ENCODE measurements at regions of chr16 and their contacts with region 1.

Region 1: GRCh38 chr16:89560378-89561141 is at the start of gene RPL13:
- DNase-seq: peak; percentile 92 to 95
- ATAC-seq: peak; percentile 82 to 86
- H3K4me3 ChIP-seq: peak within 1 kb of the TSS; percentile 60 to 99 (median 78)
- H3K27ac ChIP-seq: peak within 1 kb of the TSS; percentile 91 to 99 (median 96)
- H3K4me1 ChIP-seq: peaks cover 35 to 39% of the 10 kb centered on the region in 2 donors
- H3K27me3 ChIP-seq: no peaks in the 10 kb centered on the region
- CTCF ChIP-seq: peak in 1 of 5 experiments; percentile 15
- POLR2A ChIP-seq: peak; percentile 98
- total RNA-seq, gene RPL13: 4,295 to 5,889 (median 4,806) TPM

Region 2: DNA sequence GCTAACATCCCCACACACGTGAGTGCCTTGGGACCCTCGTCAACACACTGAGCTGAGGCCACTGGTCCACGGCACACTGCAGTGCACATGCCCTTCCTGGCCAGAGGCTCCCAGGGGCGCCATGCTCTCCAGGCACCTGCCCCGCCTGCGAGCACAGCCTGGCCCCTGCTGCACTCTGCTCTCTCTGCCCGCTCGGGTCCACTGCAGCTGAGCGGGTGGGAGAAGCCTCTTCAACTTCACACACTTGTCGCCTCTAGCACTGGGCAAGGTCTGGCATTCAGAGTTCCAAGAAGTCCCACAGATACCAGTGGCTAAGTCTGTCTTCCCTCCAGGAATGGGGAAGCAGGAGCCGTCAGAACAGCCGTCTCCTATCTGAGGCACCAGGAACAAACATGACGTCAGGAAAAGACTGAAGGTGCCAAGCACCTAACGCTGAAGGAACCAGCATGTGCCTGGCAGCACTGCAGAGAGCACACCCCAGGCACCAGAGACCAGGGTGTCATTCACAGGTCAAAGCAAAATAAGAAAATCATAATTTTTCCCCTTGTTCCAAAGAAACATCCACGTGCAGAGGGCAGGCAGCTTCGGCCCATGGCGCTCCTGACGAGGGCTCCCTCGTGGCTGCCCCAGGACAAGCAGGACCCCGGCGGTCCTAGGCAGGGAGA is 260.1 kb before region 1 on chr16:
- in situ Hi-C with region 1: no loop called
- intact Hi-C with region 1: loop called (anchors 5 kb)
- DNase-seq: peak; percentile 76 to 92
- ATAC-seq: peak; percentile 81 to 84
- H3K4me3 ChIP-seq: no peak overlapping the region
- H3K27ac ChIP-seq: peak overlapping the region; percentile 91 to 97 (median 92)
- H3K4me1 ChIP-seq: peaks cover 38 to 51% of the 10 kb centered on the region in 2 donors
- H3K27me3 ChIP-seq: no peaks in the 10 kb centered on the region
- CTCF ChIP-seq: no peak
- POLR2A ChIP-seq: peak; percentile 56 to 61

Region 3: GRCh38 chr16:89334988-89335802 is 225.4 kb before region 1 on chr16:
- in situ Hi-C with region 1: no loop called
- intact Hi-C with region 1: loop called (anchors 1 kb)
- DNase-seq: peak in 1 of 2 donors; percentile 28
- ATAC-seq: peak in 1 of 2 donors; percentile 28
- H3K4me3 ChIP-seq: peak overlapping the region in 3 of 4 donors; percentile 0 to 24 (median 8)
- H3K27ac ChIP-seq: peak overlapping the region; percentile 89 to 97 (median 94)
- H3K4me1 ChIP-seq: peaks cover 80 to 84% of the 10 kb centered on the region in 2 donors
- H3K27me3 ChIP-seq: no peaks in the 10 kb centered on the region
- CTCF ChIP-seq: peak in 3 of 5 experiments; percentile 5 to 27 (median 23)
- POLR2A ChIP-seq: no peak

Region 4: DNA sequence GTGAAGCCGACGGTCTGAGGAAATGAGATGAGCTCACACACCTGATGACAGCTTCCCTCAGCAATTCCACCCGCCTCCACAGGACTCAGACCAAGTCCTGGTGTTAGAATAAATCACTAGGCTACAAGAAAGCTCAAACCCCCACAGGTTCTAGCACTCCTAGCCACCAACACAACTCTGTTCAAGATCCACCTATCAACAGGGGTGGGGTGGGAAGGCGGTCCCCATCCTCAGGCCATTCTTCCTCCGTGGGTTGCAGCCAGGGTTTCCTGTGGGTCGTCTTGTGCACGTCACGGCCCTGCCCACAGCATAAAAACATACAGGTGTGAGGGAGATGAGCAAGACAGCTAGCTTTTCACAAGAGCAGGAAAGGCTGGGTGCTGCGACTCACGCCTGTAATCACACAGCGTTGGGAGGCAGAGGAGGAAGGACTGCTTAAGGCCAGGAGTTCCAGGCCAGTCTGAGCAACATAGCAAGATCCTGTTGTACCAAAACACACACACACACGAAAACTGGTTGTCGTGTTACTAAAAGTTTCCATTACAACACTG is 151.3 kb before region 1 on chr16:
- in situ Hi-C with region 1: no loop called
- intact Hi-C with region 1: loop called (anchors 5 kb)
- DNase-seq: no peak
- ATAC-seq: no peak
- H3K4me3 ChIP-seq: no peak overlapping the region
- H3K27ac ChIP-seq: peak overlapping the region; percentile 65 to 82 (median 76)
- H3K4me1 ChIP-seq: peaks cover 92 to 97% of the 10 kb centered on the region in 2 donors
- H3K27me3 ChIP-seq: no peaks in the 10 kb centered on the region
- CTCF ChIP-seq: no peak
- POLR2A ChIP-seq: no peak

Region 5: GRCh38 chr16:89602273-89602951 is 41.9 kb after region 1 on chr16:
- in situ Hi-C with region 1: no loop called
- intact Hi-C with region 1: no loop called
- DNase-seq: no peak
- ATAC-seq: no peak
- H3K4me3 ChIP-seq: no peak overlapping the region
- H3K27ac ChIP-seq: no peak overlapping the region
- H3K4me1 ChIP-seq: no peaks in the 10 kb centered on the region
- H3K27me3 ChIP-seq: peaks cover 0 to 27% (median 6%) of the 10 kb centered on the region in 3 donors
- CTCF ChIP-seq: no peak
- POLR2A ChIP-seq: no peak